Activated T-helper 1 cell treated with anti-CD3 and anti-CD28 coated beads, Interleukin-12 subunit alpha, Interleukin-12 subunit beta, Interleukin-2, Interleukin-4 antibody, amounts not matched to agents 30 ng/mL and 10 ng/mL and 1 ng/mL, durations not matched to agents 14 hours and 24 hours and 36 hours (primary cell): ENCODE measurements at regions of chr9 and their contacts with region 1.

Region 1: GRCh38 chr9:120928483-120929228 is 2.1 kb upstream of the TRAF1 start:
- DNase-seq: peak; percentile 82
- H3K4me3 Mint-ChIP-seq: peak overlapping the region; percentile 89
- H3K27ac Mint-ChIP-seq: peak overlapping the region; percentile 96
- H3K4me1 Mint-ChIP-seq: peaks cover 87% of the 10 kb centered on the region
- H3K27me3 Mint-ChIP-seq: no peaks in the 10 kb centered on the region

Region 2: DNA sequence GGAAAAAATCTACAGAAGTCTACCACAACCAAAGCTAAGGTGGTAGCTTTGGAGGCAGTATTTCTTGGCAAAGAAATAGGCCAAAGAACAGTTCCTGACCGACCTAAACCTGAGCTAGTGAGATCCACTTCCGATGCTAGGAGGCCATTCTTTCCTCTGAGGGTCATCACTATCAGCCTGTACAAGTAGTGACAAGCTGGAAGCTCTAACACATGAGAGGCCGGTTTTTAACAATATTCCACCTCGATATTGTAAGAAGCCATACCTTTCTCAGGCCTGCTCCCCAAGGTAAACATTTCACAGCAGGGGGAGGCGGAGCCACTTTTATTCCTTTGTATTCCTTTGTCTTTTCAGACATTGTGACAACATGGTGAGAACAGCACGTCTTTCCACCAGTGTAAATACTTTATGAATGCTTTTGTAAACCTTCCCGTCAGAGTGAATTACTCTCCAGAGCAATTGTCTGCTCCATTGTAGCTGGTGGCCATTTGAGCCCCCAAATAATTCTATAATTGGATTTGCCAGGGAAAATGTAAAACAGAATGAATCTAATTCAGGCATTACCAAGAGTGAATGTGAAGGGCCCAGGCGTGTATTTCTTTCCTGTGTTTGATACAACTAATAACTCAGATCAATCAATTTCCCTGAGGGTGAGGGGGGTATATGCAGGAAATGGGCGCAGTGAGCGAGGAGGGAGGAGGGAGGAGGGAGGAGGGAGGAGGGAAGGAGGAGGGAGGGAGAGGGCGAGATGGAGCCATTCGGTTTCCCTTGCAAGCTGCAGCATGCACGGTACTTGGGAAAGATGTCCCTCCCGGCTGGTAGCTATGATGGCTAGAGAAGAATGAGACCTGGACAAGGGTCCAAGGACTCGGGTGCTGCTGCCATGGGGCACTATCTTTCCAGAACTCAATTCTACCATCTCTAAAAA is 515.3 kb before region 1 on chr9:
- intact Hi-C with region 1: no loop called
- DNase-seq: no peak
- H3K4me3 Mint-ChIP-seq: no peak overlapping the region
- H3K27ac Mint-ChIP-seq: no peak overlapping the region
- H3K4me1 Mint-ChIP-seq: no peaks in the 10 kb centered on the region
- H3K27me3 Mint-ChIP-seq: no peaks in the 10 kb centered on the region

Region 3: GRCh38 chr9:120868676-120869359 is 59.8 kb before region 1 on chr9:
- intact Hi-C with region 1: loop called (anchors 1 kb)
- DNase-seq: peak; percentile 93
- H3K4me3 Mint-ChIP-seq: peak overlapping the region; percentile 88
- H3K27ac Mint-ChIP-seq: peak overlapping the region; percentile 91
- H3K4me1 Mint-ChIP-seq: peaks cover 48% of the 10 kb centered on the region
- H3K27me3 Mint-ChIP-seq: no peaks in the 10 kb centered on the region

Region 4: GRCh38 chr9:120892748-120893610 is 35.7 kb before region 1 on chr9:
- intact Hi-C with region 1: loop called (anchors 1 kb)
- DNase-seq: peak; percentile 62
- H3K4me3 Mint-ChIP-seq: peak overlapping the region; percentile 69
- H3K27ac Mint-ChIP-seq: peak overlapping the region; percentile 99
- H3K4me1 Mint-ChIP-seq: peaks cover 74% of the 10 kb centered on the region
- H3K27me3 Mint-ChIP-seq: no peaks in the 10 kb centered on the region

Region 5: GRCh38 chr9:121074635-121075385 is 146.2 kb after region 1 on chr9 and contains the start of gene CNTRL:
- intact Hi-C with region 1: loop called (anchors 1 kb)
- DNase-seq: peak; percentile 90
- H3K4me3 Mint-ChIP-seq: peak within 1 kb of the TSS; percentile 100
- H3K27ac Mint-ChIP-seq: peak within 1 kb of the TSS; percentile 91
- H3K4me1 Mint-ChIP-seq: peaks cover 57% of the 10 kb centered on the region
- H3K27me3 Mint-ChIP-seq: no peaks in the 10 kb centered on the region
- total RNA-seq, gene CNTRL: 69.9 and 74.2 TPM in 2 replicates

Region 6: DNA sequence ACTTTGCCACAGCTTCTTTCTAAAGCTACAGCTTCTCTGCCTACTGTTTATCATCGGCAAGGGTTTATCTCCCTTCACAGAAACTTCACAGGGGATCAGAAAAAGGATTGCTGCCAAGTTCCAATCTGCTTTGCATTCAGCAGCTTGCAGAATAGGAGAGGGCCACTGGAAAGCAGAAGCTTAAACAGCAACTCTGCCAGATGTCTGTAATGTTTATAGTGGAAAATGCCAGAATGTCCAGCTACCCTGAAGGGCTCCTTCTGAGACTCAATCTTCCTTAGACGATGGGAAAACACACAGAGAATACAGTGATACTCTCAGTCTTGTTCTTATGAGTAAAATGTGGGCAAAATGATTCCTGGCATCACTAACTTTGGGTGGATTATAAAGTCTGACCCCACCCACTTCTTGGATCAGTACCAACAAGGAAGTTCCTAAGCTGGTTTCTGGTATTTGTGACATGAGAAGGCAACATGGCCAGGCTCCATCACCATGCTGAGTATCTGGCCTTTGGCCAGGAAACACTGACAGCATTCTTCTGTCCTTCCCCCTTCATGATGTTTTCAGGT is 422.4 kb after region 1 on chr9:
- intact Hi-C with region 1: loop called (anchors 10 kb)
- DNase-seq: no peak
- H3K4me3 Mint-ChIP-seq: no peak overlapping the region
- H3K27ac Mint-ChIP-seq: no peak overlapping the region
- H3K4me1 Mint-ChIP-seq: peaks cover 46% of the 10 kb centered on the region
- H3K27me3 Mint-ChIP-seq: no peaks in the 10 kb centered on the region